Activated CD4-positive, alpha-beta memory T cell treated with anti-CD3 and anti-CD28 coated beads, Interleukin-2, amount 10 ng/mL, durations not matched to agents 7 days and 5 days (primary cell): ENCODE measurements at regions of chr15 and their contacts with region 1.

Region 1: GRCh38 chr15:79853458-79854328 is 43.1 kb downstream of the MTHFS start:
- DNase-seq: peak; percentile 67
- H3K4me3 Mint-ChIP-seq: no peak overlapping the region
- H3K27ac Mint-ChIP-seq: no peak overlapping the region
- H3K4me1 Mint-ChIP-seq: peaks cover 12% of the 10 kb centered on the region
- H3K27me3 Mint-ChIP-seq: no peaks in the 10 kb centered on the region

Region 2: DNA sequence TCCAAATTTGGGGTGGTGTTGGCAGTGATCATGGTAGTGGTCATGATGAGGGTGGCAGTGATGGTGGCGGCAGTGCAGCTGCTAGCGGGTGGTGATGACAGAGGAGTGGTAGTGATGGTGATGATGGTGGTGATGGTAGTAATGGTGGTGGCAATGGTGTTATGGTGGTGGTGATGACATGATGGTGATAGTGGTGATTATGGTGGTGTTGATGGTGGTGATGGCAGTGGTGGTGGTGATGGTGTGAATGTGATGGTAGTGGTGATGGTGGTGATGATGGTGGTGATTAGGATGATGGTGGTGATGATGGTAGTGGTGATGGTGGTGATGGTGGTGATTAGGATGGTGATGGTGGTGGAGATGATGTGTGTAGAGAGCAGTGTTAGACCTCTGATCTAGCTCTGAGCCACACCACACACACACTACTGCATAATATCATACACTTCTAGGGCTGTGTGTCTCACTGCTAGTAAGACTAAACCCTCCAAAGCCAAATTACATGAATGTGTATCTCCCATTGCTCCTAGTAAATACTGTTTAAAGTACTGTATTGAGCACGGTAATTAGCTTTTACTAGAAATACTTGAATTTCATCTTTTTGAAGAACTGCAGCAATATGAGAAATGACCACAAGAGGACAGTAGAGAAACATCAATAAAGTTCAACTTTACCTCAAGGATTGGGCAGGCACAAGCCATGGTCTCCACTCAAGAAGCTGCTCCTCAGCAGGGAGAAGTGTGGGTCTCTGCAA is 514.0 kb before region 1 on chr15:
- CTCF ChIA-PET with region 1: interaction called, 10 read pairs
- POLR2A ChIA-PET with region 1: no interaction called
- DNase-seq: no peak
- H3K4me3 Mint-ChIP-seq: no peak overlapping the region
- H3K27ac Mint-ChIP-seq: no peak overlapping the region
- H3K4me1 Mint-ChIP-seq: no peaks in the 10 kb centered on the region
- H3K27me3 Mint-ChIP-seq: no peaks in the 10 kb centered on the region

Region 3: DNA sequence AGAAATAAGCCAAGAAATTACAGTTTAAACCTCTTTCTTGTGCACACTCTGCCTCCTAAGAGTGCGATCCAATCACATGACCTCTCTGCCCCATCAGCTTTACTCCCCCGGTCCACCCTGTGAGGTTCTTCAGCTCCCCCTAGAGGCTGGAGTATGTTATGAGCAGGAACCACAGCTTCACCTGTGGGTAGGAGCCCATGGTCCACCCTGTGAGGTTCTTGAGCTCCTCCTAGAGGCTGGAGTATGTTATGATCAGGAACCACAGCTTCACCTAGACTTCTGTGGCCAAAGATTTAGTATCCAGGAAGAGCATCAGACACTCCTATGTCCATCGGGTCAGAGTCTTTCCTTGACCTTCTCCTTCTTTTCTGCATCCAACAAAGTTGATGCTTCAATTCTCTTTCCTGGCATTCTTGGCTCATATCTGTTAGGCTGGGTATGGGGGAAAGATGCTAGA is 257.6 kb before region 1 on chr15:
- CTCF ChIA-PET with region 1: interaction called, 10 read pairs
- POLR2A ChIA-PET with region 1: no interaction called
- DNase-seq: peak; percentile 69
- H3K4me3 Mint-ChIP-seq: no peak overlapping the region
- H3K27ac Mint-ChIP-seq: no peak overlapping the region
- H3K4me1 Mint-ChIP-seq: no peaks in the 10 kb centered on the region
- H3K27me3 Mint-ChIP-seq: peaks cover 9% of the 10 kb centered on the region

Region 4: DNA sequence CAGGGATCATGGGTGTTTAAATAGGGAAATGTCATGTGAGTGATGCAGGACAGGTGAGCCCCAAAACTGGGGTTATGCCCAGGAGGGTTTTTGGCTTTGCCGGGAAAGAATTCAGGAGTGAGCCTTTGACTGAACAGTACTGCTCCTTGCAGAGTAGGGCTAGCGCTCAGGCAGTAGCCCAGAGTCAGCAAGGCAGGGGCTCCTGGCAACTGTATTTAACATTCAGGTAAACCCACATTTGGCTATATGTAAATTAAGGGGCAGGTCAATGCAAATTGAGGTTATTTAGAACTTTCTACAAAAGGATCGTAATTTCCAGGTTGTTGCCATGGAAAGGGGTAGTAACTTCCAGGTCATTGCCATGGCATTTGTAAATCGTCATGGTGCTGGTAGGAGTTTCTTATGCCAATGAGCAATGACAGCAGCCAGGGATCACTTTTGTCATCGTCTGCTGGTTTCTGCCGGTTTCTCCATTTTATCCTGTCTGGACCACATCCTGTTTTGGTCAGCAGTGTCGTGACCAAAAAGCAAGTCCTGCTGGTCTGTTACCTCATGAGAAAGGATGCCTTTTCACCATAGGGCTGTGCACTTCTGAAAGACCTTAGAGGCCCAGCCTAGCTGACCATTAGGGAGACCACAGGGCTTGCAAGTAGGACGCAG is 18.8 kb after region 1 on chr15:
- CTCF ChIA-PET with region 1: interaction called, 21 read pairs
- POLR2A ChIA-PET with region 1: no interaction called
- DNase-seq: peak; percentile 68
- H3K4me3 Mint-ChIP-seq: no peak overlapping the region
- H3K27ac Mint-ChIP-seq: peak overlapping the region; percentile 25
- H3K4me1 Mint-ChIP-seq: peaks cover 16% of the 10 kb centered on the region
- H3K27me3 Mint-ChIP-seq: no peaks in the 10 kb centered on the region

Region 5: GRCh38 chr15:79957741-79958140 is 104.0 kb after region 1 on chr15:
- CTCF ChIA-PET with region 1: no interaction called
- POLR2A ChIA-PET with region 1: no interaction called
- DNase-seq: no peak
- H3K4me3 Mint-ChIP-seq: no peak overlapping the region
- H3K27ac Mint-ChIP-seq: no peak overlapping the region
- H3K4me1 Mint-ChIP-seq: peaks cover 23% of the 10 kb centered on the region
- H3K27me3 Mint-ChIP-seq: no peaks in the 10 kb centered on the region

Region 6: GRCh38 chr15:79989682-79990081 is 136.0 kb after region 1 on chr15:
- CTCF ChIA-PET with region 1: interaction called, 23 read pairs
- POLR2A ChIA-PET with region 1: no interaction called
- DNase-seq: no peak
- H3K4me3 Mint-ChIP-seq: no peak overlapping the region
- H3K27ac Mint-ChIP-seq: no peak overlapping the region
- H3K4me1 Mint-ChIP-seq: peaks cover 3% of the 10 kb centered on the region
- H3K27me3 Mint-ChIP-seq: peaks cover 2% of the 10 kb centered on the region